Activated CD8-positive, alpha-beta T cell treated with anti-CD3 and anti-CD28 coated beads, Interleukin-2, amount 10 ng/mL, durations not matched to agents 7 days and 5 days (primary cell): ENCODE measurements at regions of chr14 and their contacts with region 1.

Region 1: DNA sequence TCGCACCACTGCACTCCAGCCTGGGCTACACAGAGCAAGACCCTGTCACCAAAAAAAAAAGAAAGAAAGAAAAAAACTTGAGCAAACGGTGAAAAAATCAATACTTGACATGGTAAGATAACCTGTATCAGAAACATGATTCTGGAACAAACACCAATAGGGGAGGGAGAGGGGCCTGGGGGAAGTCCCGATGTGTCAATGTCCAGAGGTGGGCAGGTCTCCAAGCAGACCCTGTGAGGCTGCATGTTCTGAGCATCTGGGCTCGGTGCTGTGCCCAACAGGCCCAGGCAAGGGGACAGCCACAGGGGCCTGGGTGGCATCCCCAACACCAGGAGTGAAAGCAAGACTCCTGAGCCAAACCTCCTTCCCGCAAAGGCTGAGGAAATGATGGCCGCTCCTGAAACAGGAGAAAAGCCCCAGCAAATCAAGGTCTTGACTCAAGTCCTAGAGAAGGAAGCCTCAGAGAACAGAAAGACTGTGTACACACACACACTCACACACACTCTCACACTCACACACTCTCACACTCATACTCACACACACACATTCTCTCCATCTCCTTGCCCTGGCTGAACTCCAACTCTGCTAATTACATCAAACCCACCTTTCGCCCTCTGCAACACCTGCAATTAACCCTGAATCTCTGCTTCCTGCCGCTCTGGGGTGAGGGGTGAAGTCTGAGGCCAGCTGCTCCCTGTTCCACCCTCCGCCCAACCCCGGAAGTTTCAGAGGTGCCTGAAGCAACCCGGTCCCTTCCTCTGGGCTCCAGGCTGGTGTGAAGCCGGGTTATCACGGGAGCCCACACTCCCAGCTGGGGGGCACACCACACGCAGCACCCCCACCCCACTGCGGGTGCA is 20.4 kb downstream of the CCDC88C start:
- DNase-seq: peak; percentile 82
- ATAC-seq: peak; percentile 76
- H3K4me3 Mint-ChIP-seq: peak overlapping the region; percentile 59
- H3K27ac Mint-ChIP-seq: peak overlapping the region; percentile 87
- H3K4me1 Mint-ChIP-seq: peaks cover 94% of the 10 kb centered on the region
- H3K27me3 Mint-ChIP-seq: no peaks in the 10 kb centered on the region

Region 2: GRCh38 chr14:91129276-91129675 is 267.9 kb before region 1 on chr14:
- CTCF ChIA-PET with region 1: no interaction called
- POLR2A ChIA-PET with region 1: no interaction called
- DNase-seq: no peak
- ATAC-seq: no peak
- H3K4me3 Mint-ChIP-seq: no peak overlapping the region
- H3K27ac Mint-ChIP-seq: no peak overlapping the region
- H3K4me1 Mint-ChIP-seq: peaks cover 30% of the 10 kb centered on the region
- H3K27me3 Mint-ChIP-seq: no peaks in the 10 kb centered on the region

Region 3: DNA sequence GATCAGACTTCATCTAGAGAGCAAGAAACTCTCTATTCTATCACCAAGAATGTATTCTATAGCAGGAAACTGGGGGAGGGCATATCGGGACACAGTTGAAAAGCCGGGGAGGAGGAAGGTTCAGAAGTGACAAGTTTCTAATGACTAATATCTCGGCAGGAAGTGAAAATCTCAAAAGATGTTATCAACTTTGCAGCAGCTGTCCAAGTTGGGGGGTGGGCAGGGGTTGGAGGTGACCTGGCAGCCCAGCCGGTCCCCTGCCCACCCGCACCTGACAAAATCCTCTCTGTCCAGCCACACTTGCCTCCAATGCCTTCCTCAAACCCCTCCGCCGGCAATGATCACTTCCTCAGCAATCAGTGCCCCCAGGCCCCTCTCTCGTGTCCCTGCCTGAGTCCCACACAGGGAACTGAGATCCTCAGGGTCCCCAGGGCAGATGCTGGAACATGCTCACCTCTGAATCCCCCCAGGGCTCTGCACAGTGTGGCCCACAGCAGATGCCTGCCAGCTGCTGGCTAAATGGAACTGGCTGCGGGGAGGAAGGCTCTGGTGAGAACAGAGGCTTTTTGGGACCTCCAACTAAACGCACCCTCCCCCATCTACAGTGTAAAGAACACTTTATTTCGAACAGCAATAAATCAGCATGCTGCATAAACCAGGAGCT is 23.5 kb before region 1 on chr14:
- CTCF ChIA-PET with region 1: interaction called, 43 read pairs
- POLR2A ChIA-PET with region 1: interaction called, 36 read pairs
- DNase-seq: peak; percentile 76
- ATAC-seq: peak; percentile 46
- H3K4me3 Mint-ChIP-seq: peak overlapping the region; percentile 78
- H3K27ac Mint-ChIP-seq: peak overlapping the region; percentile 91
- H3K4me1 Mint-ChIP-seq: peaks cover 100% of the 10 kb centered on the region
- H3K27me3 Mint-ChIP-seq: no peaks in the 10 kb centered on the region

Region 4: GRCh38 chr14:91410771-91411536 is 13.8 kb after region 1 on chr14:
- CTCF ChIA-PET with region 1: interaction called, 151 read pairs
- POLR2A ChIA-PET with region 1: interaction called, 65 read pairs
- DNase-seq: peak; percentile 45
- ATAC-seq: peak; percentile 14
- H3K4me3 Mint-ChIP-seq: peak overlapping the region; percentile 64
- H3K27ac Mint-ChIP-seq: peak overlapping the region; percentile 92
- H3K4me1 Mint-ChIP-seq: peaks cover 88% of the 10 kb centered on the region
- H3K27me3 Mint-ChIP-seq: no peaks in the 10 kb centered on the region